ENCODE measurements at regions of chr14 and their contacts with region 1.

Region 1: DNA sequence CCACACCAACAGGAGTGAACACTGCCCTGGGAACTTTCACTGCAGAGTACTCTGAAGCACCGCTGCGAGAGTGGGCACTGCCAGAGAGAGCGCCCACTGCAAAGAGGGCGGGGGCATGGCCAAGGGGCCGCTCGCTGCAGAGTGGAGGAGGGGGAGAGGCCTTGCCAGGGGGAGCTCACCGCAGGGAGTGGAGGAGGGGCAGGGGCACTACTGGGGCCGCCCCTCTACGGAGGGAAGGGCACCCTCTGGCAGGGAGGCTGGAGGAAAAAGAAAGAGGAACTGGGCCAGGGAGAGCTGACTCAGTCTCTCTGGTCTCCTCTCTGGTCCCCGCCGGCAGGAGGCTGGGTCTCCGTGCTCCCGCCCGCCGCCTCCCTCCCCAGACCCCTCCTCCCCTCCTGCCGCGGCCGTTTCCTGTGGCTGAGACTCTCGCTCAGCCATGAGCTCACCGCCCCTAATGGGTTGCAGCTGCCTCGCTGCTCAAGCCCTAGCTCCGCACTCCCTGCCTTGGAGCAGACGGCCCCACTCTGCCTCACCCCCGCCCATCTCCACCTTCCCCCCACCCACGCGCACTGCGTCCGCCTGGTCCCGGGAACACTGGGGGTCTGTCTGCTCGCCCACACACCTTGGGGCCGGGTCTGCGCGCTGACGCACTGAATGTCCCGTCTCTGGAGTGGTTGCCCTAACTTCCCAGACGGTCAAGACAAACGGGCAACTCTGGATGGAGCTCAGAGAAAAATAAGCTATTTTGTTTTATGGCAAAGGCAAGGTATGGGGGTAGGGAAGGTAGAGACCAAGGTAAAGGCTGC is 1.3 kb downstream of the ARHGEF40 start:
- DNase-seq: peak in 6 of 9 experiments; percentile 32 to 64 (median 52)
- ATAC-seq: peak; percentile 43
- H3K4me3 ChIP-seq: peak overlapping the region; percentile 47 to 59
- H3K4me3 Mint-ChIP-seq: peak overlapping the region; percentile 83
- H3K27ac ChIP-seq: no peak overlapping the region
- H3K27ac Mint-ChIP-seq: no peak overlapping the region
- H3K4me1 ChIP-seq: peaks cover 35% of the 10 kb centered on the region
- H3K4me1 Mint-ChIP-seq: peaks cover 34% of the 10 kb centered on the region
- H3K27me3 ChIP-seq: peaks cover 33 to 36% of the 10 kb centered on the region in 2 experiments
- H3K27me3 Mint-ChIP-seq: peaks cover 60% of the 10 kb centered on the region
- CTCF ChIP-seq: no peak

Region 2: DNA sequence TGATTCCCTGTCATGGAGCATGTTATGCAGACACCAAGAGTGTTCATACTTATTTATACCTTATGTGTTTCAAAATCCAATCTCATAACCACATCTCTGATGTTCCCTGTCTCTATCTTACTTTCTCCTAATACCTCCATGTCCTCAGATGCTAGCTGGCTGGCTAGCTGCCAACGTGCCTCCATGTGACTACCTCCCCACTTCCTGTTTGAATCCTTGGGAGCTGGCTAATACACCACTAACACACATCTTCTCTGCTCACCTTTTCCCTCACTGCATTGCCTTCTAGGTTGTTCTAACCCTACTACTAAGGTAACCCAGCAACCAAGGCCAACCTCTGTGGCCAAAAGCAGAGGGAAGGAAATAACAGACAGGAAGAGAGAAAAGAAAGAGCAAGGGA is 793.0 kb before region 1 on chr14:
- CTCF ChIA-PET with region 1: no interaction called
- POLR2A ChIA-PET with region 1: no interaction called
- intact Hi-C with region 1: no loop called
- DNase-seq: peak in 2 of 9 experiments; percentile 25 to 30
- ATAC-seq: no peak
- H3K4me3 ChIP-seq: no peak overlapping the region
- H3K4me3 Mint-ChIP-seq: no peak overlapping the region
- H3K27ac ChIP-seq: no peak overlapping the region
- H3K27ac Mint-ChIP-seq: peak overlapping the region; percentile 16
- H3K4me1 ChIP-seq: peaks cover 7% of the 10 kb centered on the region
- H3K4me1 Mint-ChIP-seq: peaks cover 27% of the 10 kb centered on the region
- H3K27me3 ChIP-seq: no peaks in the 10 kb centered on the region
- H3K27me3 Mint-ChIP-seq: no peaks in the 10 kb centered on the region
- CTCF ChIP-seq: no peak

Region 3: DNA sequence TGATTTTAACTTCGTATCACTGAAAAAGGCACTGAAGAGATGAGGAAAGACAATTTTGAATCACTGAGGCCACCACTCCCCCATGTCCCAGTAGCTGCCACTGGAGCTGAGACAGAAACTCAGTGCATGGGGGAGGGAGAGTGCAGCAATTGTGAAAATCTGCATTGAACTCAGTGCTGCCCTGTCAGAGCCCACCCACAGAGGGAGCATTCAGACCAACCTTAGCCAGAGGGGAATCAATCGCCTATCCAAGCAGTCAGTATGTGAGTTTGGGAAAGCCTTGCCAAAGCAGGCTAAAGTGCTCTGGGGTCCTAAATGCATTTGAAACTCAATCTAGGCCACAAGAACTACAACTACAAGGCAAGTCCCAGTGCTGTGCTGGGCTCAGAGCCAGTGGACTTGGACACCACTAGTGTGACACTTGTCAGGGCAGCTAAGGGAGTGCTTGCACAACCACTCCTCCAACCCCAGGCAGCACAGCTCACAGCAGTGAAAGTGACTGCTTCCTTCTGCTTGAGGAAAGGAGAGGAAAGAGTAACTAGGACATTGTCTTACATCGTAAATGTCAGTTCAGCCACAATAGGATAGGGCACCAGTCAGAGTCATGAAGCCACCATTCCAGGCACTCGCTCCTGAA is 166.9 kb before region 1 on chr14:
- CTCF ChIA-PET with region 1: no interaction called
- POLR2A ChIA-PET with region 1: no interaction called
- intact Hi-C with region 1: no loop called
- DNase-seq: no peak
- ATAC-seq: no peak
- H3K4me3 ChIP-seq: no peak overlapping the region
- H3K4me3 Mint-ChIP-seq: no peak overlapping the region
- H3K27ac ChIP-seq: no peak overlapping the region
- H3K27ac Mint-ChIP-seq: no peak overlapping the region
- H3K4me1 ChIP-seq: no peaks in the 10 kb centered on the region
- H3K4me1 Mint-ChIP-seq: no peaks in the 10 kb centered on the region
- H3K27me3 ChIP-seq: no peaks in the 10 kb centered on the region
- H3K27me3 Mint-ChIP-seq: peaks cover 12% of the 10 kb centered on the region
- CTCF ChIP-seq: no peak

Region 4: GRCh38 chr14:21024585-21025370 is 46.6 kb before region 1 on chr14 and contains the start of gene NDRG2:
- CTCF ChIA-PET with region 1: interaction called, 4 read pairs
- POLR2A ChIA-PET with region 1: no interaction called
- intact Hi-C with region 1: loop called in 1 of 2 experiments (anchors 2 kb)
- DNase-seq: peak; percentile 60 to 87 (median 80)
- ATAC-seq: peak; percentile 91
- H3K4me3 ChIP-seq: peak within 1 kb of the TSS; percentile 84 to 86
- H3K4me3 Mint-ChIP-seq: peak within 1 kb of the TSS; percentile 92
- H3K27ac ChIP-seq: peak within 1 kb of the TSS in 1 of 2 experiments; percentile 33
- H3K27ac Mint-ChIP-seq: peak within 1 kb of the TSS; percentile 70
- H3K4me1 ChIP-seq: peaks cover 13% of the 10 kb centered on the region
- H3K4me1 Mint-ChIP-seq: peaks cover 19% of the 10 kb centered on the region
- H3K27me3 ChIP-seq: no peaks in the 10 kb centered on the region
- H3K27me3 Mint-ChIP-seq: no peaks in the 10 kb centered on the region
- CTCF ChIP-seq: no peak
- total RNA-seq, gene NDRG2: 18.9 to 24.8 TPM

Region 5: DNA sequence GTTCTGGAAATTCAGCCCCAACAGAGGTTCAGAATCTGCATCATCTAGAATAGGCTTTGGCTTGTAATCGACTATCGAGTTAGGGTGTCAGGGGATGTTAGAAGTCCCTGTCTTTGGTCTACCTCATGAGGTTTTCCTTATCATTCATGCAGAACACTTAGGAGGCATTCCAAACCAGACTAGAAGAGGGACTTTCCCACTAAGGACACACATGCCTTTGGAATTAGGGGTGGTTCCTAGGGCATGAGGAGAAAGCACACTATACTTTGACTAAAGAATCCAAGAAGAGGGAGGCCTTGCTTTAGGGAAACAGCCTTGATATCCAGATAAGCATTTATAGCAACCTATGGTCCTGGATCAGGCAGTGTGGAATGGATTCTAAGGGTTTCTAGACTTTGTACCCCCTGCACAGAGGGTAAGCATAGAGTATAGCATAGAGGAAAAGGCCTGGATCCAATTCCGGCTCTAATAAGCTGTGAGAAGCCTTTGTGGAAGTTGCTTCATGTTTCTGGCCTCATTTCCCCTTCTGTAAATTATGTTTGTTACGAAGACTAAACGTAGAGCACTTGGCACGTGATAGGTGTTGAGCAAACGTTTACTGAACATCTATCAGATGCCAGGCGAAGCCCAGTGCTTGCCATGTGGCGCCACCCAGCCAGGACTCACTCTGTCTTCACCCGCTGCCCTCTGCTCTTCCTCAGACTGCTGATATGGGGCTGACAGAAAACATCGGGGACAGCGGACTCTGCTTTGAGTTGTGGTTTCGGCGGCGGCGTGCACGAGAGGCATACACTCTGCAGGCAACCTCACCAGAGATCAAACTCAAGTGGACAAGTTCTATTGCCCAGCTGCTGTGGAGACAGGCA is 13.8 kb after region 1 on chr14:
- CTCF ChIA-PET with region 1: interaction called, 36 read pairs
- POLR2A ChIA-PET with region 1: interaction called, 5 read pairs
- intact Hi-C with region 1: loop called in 1 of 2 experiments (anchors 2 kb)
- DNase-seq: no peak
- ATAC-seq: no peak
- H3K4me3 ChIP-seq: no peak overlapping the region
- H3K4me3 Mint-ChIP-seq: no peak overlapping the region
- H3K27ac ChIP-seq: no peak overlapping the region
- H3K27ac Mint-ChIP-seq: no peak overlapping the region
- H3K4me1 ChIP-seq: peaks cover 18% of the 10 kb centered on the region
- H3K4me1 Mint-ChIP-seq: peaks cover 20% of the 10 kb centered on the region
- H3K27me3 ChIP-seq: no peaks in the 10 kb centered on the region
- H3K27me3 Mint-ChIP-seq: no peaks in the 10 kb centered on the region
- CTCF ChIP-seq: no peak

Region 6: GRCh38 chr14:21191809-21192446 is 120.5 kb after region 1 on chr14:
- CTCF ChIA-PET with region 1: no interaction called
- POLR2A ChIA-PET with region 1: no interaction called
- intact Hi-C with region 1: no loop called
- DNase-seq: peak; percentile 29 to 81 (median 68)
- ATAC-seq: peak; percentile 93
- H3K4me3 ChIP-seq: peak overlapping the region; percentile 52 to 65
- H3K4me3 Mint-ChIP-seq: peak overlapping the region; percentile 76
- H3K27ac ChIP-seq: no peak overlapping the region
- H3K27ac Mint-ChIP-seq: no peak overlapping the region
- H3K4me1 ChIP-seq: peaks cover 6% of the 10 kb centered on the region
- H3K4me1 Mint-ChIP-seq: peaks cover 17% of the 10 kb centered on the region
- H3K27me3 ChIP-seq: no peaks in the 10 kb centered on the region
- H3K27me3 Mint-ChIP-seq: no peaks in the 10 kb centered on the region
- CTCF ChIP-seq: no peak

Measured in CD8-positive, alpha-beta T cell (primary cell).